Activated CD4-positive, alpha-beta T cell treated with anti-CD3 and anti-CD28 coated beads, Interleukin-2, amount 10 ng/mL, durations not matched to agents 24 days and 14 days (primary cell): ENCODE measurements at regions of chr11 and their contacts with region 1.

Region 1: DNA sequence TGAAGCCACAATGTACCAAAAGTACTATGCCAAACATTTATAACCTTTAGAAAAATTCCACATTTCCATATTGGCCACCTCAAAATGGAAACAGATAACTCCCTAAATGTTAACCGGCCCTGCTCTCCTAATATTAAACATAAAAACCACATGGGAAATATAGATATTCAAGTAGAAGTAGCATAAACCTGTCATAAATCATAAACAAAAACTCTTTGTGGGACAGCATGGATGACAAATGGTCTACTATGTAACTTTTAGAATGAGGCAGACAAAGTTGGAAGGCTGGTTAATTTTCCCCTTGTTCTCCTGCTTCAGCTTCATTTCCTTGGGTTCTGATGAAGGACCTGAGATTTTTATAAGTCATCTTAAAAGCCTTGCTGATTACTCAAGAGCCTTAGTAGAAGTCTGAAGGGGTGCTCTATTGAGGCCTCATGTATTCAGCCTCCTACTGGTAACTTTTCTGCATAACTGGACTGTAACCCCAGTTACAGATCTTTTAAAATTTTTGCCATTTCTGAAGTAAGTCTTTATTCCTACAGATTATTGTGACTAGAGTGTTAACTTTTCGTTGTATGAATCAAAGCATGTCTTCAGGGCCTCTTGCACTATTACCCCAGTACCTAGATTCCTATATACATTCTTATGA is 116.4 kb downstream of the STIM1 start:
- DNase-seq: no peak
- H3K4me3 Mint-ChIP-seq: no peak overlapping the region
- H3K27ac Mint-ChIP-seq: no peak overlapping the region
- H3K4me1 Mint-ChIP-seq: peaks cover 55% of the 10 kb centered on the region
- H3K27me3 Mint-ChIP-seq: no peaks in the 10 kb centered on the region

Region 2: GRCh38 chr11:3841426-3842350 is 130.2 kb before region 1 on chr11:
- intact Hi-C with region 1: no loop called
- DNase-seq: peak; percentile 97
- H3K4me3 Mint-ChIP-seq: peak overlapping the region; percentile 93
- H3K27ac Mint-ChIP-seq: peak overlapping the region; percentile 97
- H3K4me1 Mint-ChIP-seq: peaks cover 55% of the 10 kb centered on the region
- H3K27me3 Mint-ChIP-seq: no peaks in the 10 kb centered on the region

Region 3: DNA sequence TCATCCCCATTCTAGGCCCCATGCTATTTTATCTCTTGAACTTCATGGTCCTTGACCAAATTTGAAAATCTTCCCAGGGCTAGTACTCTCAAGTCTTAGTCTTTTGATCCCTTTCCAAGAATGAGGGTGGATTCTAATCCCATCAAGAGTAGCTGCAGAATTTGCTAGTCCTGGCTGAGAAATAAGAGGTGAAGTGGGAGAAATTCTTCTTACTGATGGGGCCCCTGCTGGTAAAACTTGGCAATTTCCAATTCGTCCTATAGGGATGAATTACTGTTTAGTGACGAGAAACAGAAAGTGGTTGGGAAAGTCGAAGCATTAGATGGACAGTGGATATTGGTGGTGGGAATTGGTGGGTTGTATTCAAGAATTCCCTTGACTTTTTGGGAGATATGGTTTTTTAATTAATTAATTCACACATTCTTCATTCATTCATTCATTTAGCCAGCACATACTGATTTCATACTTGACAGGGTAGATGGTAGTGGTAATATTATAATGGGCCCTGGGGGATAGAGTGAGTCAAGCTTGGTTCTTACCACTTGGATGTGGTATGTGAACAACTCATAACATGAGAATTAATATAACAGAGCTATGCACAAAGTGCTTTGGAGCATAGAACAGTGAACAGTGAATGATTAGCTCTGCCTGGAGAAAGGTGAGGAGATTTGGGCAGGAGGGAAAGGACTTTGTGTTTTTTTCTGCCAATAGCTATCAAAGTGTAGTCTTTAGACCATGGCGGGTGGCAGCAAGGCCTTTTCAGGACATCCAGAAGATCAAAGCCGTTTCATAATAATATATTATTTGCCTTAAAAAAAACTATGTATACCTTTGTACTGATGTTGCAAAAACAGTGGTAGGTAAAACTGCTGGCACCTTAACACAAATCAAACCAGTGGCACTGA is 12.6 kb before region 1 on chr11:
- intact Hi-C with region 1: loop called (anchors 1 kb)
- DNase-seq: no peak
- H3K4me3 Mint-ChIP-seq: no peak overlapping the region
- H3K27ac Mint-ChIP-seq: peak overlapping the region; percentile 67
- H3K4me1 Mint-ChIP-seq: peaks cover 59% of the 10 kb centered on the region
- H3K27me3 Mint-ChIP-seq: no peaks in the 10 kb centered on the region

Region 4: DNA sequence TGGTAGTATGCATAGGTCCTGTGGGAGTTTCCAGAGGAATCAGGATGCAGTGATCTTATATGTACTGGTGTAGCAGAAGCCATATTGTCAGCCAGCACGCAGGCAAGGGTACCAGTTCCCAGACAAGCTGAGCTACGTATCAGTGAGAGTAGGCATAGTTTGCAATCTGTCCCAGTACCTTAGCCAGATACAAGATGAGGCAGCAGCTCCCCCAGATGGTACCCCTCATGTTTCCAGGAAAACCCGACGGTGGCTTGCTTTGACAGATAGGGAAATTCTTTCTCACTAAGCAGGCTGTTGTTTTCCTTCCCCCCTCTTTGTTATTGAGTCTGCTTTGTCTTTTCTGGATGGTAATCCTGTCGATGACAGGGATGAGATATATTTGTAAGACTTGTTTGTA is 13.0 kb after region 1 on chr11:
- intact Hi-C with region 1: loop called (anchors 2 kb)
- DNase-seq: peak; percentile 79
- H3K4me3 Mint-ChIP-seq: no peak overlapping the region
- H3K27ac Mint-ChIP-seq: peak overlapping the region; percentile 61
- H3K4me1 Mint-ChIP-seq: peaks cover 61% of the 10 kb centered on the region
- H3K27me3 Mint-ChIP-seq: no peaks in the 10 kb centered on the region